ENCODE measurements at regions of chr4 and their contacts with region 1.

Region 1: DNA sequence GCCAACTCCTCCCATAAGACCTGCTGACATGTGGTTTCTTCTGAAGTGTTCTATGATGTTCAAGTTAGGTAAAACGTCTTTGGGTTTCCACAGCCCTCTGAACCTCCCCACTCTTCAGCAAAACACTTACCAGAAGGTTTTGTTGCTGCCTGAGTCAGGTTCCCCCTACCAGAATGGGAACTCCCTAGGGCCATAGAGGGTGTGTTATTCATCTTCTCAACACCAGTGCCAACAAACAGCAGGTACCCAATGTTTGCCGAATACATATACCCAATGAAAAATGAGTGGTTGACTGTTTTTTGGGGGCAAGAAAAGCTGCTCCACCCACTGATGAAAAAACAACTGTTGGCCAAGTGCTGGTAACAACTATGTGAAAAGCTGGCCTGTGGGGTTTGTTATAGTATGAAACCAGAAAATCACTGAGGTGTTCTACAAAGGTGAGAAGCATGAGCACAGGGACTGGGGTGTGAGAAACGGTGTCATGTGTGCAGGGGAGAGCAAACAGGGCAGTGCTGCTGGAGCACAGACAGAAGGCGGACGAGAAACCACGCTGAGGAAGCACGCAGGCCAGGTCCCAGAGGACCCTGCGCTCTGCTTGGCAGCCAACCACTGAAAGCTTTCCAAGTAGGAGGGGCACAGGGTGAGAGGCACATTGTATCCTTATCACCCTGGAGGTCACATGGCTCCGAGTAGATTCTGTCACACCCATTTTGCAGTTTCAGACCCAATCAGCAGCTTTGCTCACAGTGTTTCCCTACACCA is 28.8 kb downstream of the ATP8A1 start:
- DNase-seq: peak in 8 of 9 donors; percentile 10 to 91 (median 78)
- ATAC-seq: peak; percentile 92
- H3K4me3 ChIP-seq: peak overlapping the region; percentile 31
- H3K4me3 Mint-ChIP-seq: peak overlapping the region; percentile 53 to 89 (median 80)
- H3K27ac ChIP-seq: peak overlapping the region; percentile 70
- H3K27ac Mint-ChIP-seq: peak overlapping the region; percentile 86 to 99 (median 96)
- H3K4me1 ChIP-seq: peaks cover 31 to 40% of the 10 kb centered on the region in 2 donors
- H3K4me1 Mint-ChIP-seq: peaks cover 35 to 77% (median 74%) of the 10 kb centered on the region in 7 donors
- H3K27me3 ChIP-seq: no peaks in the 10 kb centered on the region
- H3K27me3 Mint-ChIP-seq: no peaks in the 10 kb centered on the region

Region 2: DNA sequence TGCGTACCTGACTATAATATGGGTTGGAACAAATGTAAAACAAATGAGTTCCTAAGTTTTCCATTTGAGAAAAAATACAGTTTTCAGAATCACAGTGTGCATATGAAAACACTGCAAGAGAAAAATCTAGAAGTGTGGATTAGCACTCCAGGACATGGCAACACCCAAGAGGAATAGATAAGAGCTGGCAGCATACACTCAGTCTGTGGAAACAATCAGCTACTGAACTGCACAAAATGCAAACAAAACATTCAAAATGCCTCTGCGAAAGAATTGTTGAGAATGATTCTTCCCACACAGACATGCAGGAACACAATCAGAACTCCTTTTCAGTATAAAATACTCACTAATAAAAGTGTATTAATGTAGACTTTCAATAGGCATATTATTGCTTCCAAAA is 11.0 kb before region 1 on chr4:
- CTCF ChIA-PET with region 1: interaction called, 3 read pairs
- POLR2A ChIA-PET with region 1: no interaction called
- intact Hi-C with region 1: loop called in 1 of 2 experiments (anchors 2 kb)
- DNase-seq: no peak
- ATAC-seq: no peak
- H3K4me3 ChIP-seq: no peak overlapping the region
- H3K4me3 Mint-ChIP-seq: no peak overlapping the region
- H3K27ac ChIP-seq: no peak overlapping the region
- H3K27ac Mint-ChIP-seq: no peak overlapping the region
- H3K4me1 ChIP-seq: no peaks in the 10 kb centered on the region
- H3K4me1 Mint-ChIP-seq: peaks cover 0 to 14% (median 2%) of the 10 kb centered on the region in 7 donors
- H3K27me3 ChIP-seq: no peaks in the 10 kb centered on the region
- H3K27me3 Mint-ChIP-seq: no peaks in the 10 kb centered on the region

Region 3: DNA sequence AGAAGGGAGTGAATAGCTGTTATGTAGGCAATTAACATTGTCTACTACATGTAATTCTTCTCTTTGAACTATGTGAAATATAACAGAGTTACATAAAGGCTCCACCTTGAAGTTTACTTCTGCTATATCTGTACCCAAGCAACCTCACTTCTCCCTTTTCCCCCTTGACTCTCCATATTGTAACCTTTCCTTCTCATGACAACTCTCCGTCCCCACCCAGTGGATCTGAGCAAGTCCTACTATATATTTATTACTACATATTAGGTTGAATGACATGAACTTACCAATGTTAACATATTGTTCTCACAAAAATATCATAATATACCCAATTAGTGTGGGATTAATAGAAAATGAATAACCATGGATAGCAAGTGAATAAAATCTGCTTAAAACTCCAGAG is 122.0 kb after region 1 on chr4:
- CTCF ChIA-PET with region 1: interaction called, 4 read pairs
- POLR2A ChIA-PET with region 1: no interaction called
- intact Hi-C with region 1: loop called in 1 of 2 experiments (anchors 1 kb)
- DNase-seq: peak in 7 of 9 donors; percentile 15 to 59 (median 39)
- ATAC-seq: peak; percentile 88
- H3K4me3 ChIP-seq: no peak overlapping the region
- H3K4me3 Mint-ChIP-seq: no peak overlapping the region
- H3K27ac ChIP-seq: no peak overlapping the region
- H3K27ac Mint-ChIP-seq: no peak overlapping the region
- H3K4me1 ChIP-seq: no peaks in the 10 kb centered on the region
- H3K4me1 Mint-ChIP-seq: peaks cover 0 to 4% (median 0%) of the 10 kb centered on the region in 7 donors
- H3K27me3 ChIP-seq: no peaks in the 10 kb centered on the region
- H3K27me3 Mint-ChIP-seq: no peaks in the 10 kb centered on the region

Measured in naive thymus-derived CD4-positive, alpha-beta T cell (primary cell).